Dendritic cell treated with granulocyte-macrophage colony-stimulating factor and Interleukin-4, amounts not matched to agents 40 ng/mL and 50 ng/mL, for 4 days (primary cell): ENCODE measurements at regions of chr22 and their contacts with region 1.

Region 1: DNA sequence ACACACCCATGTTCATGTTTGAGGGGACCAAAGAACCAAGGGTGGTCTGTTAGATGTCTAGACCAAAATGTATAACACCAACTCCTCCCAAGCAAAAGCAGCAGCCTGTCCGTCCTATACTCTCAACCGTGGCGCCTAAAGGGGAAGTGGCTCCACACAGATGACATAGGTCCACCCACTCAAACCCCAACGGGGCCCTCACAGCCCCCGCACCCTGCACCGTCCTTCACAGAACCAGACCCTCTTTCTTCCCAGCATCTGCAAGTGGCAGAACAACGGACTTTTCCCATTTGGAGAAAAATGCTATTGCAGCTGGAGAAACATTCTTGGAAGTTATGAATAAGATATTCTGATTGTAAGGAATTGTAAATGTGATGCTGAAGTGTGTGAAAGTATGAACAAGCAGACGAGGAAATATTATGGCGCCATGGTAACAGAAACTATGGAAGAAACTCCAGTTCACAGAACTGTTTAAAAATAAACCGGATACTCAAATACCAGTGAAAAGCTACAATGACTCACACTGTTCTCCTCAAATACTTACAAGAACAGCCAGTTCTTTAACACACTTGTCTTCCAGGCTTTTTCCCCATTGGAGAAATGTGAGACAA is 76.5 kb upstream of the ARFGAP3 start:
- H3K4me3 Mint-ChIP-seq: peak overlapping the region; percentile 39
- H3K27ac Mint-ChIP-seq: peak overlapping the region; percentile 88
- H3K4me1 Mint-ChIP-seq: peaks cover 98% of the 10 kb centered on the region
- H3K27me3 Mint-ChIP-seq: no peaks in the 10 kb centered on the region

Region 2: GRCh38 chr22:42865536-42865935 is 68.0 kb before region 1 on chr22:
- intact Hi-C with region 1: loop called (anchors 2 kb)
- H3K4me3 Mint-ChIP-seq: no peak overlapping the region
- H3K27ac Mint-ChIP-seq: peak overlapping the region; percentile 8
- H3K4me1 Mint-ChIP-seq: peaks cover 45% of the 10 kb centered on the region
- H3K27me3 Mint-ChIP-seq: no peaks in the 10 kb centered on the region

Region 3: DNA sequence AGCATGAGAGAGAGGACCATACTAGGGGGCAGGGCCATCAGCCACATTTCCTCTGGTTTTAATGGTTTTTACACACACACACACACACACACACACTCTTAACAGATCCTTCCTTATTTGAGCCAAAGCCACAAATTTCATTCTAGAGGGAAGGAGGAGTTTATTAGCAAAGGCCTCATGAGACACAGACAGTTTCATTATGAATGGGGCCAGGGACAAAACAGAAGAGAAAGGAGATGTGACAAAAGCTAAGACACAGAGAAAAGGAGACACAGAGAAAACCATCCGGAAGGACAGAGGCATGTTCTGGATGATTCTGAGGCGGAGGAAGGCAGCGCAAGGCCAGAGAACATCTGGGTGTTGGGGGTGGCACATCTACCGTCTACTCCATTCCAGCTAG is 44.3 kb before region 1 on chr22:
- intact Hi-C with region 1: loop called (anchors 2 kb)
- H3K4me3 Mint-ChIP-seq: peak overlapping the region; percentile 72
- H3K27ac Mint-ChIP-seq: peak overlapping the region; percentile 89
- H3K4me1 Mint-ChIP-seq: peaks cover 73% of the 10 kb centered on the region
- H3K27me3 Mint-ChIP-seq: no peaks in the 10 kb centered on the region